Panc1 (cell line): ENCODE measurements at regions of chr13 and their contacts with region 1.

Region 1: GRCh38 chr13:95403828-95404522 is 102.7 kb upstream of the ABCC4 start:
- DNase-seq: peak; percentile 51
- ATAC-seq: peak; percentile 92
- H3K4me3 ChIP-seq: peak overlapping the region; percentile 14 to 47; a peak in 3 of 4 replicates
- H3K27ac ChIP-seq: peak overlapping the region; percentile 9; the same call in 1 of the 2 replicates
- H3K4me1 ChIP-seq: peaks cover 6% of the 10 kb centered on the region; the same call in 1 of the 2 replicates
- H3K27me3 ChIP-seq: no peaks in the 10 kb centered on the region
- CTCF ChIP-seq: peak; percentile 84

Region 2: DNA sequence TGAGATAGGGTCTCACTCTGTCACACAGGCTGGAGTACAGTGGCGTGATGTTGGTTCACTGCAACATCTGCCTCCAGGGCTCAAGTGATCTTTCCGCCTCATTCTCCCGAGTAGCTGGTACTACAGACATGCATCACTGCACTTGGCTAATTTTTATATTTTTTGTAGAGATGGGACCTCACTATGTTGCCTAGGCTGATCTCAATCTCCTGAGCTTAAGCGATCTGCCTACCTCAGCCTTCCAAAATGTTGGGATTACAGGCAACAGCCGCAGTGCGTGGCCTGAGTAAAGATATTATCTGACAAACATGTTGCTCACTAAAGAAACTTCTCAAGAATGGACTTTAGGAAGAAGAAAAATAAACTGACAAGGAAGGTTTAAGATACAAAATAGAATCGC is 22.7 kb after region 1 on chr13:
- CTCF ChIA-PET with region 1: no interaction called
- POLR2A ChIA-PET with region 1: interaction called, 5 read pairs
- in situ Hi-C with region 1: no loop called
- intact Hi-C with region 1: loop called (anchors 2 kb)
- DNase-seq: no peak
- ATAC-seq: no peak
- H3K4me3 ChIP-seq: no peak overlapping the region
- H3K27ac ChIP-seq: no peak overlapping the region
- H3K4me1 ChIP-seq: no peaks in the 10 kb centered on the region
- H3K27me3 ChIP-seq: no peaks in the 10 kb centered on the region
- CTCF ChIP-seq: no peak

Region 3: GRCh38 chr13:95805921-95806320 is 401.9 kb after region 1 on chr13:
- CTCF ChIA-PET with region 1: interaction called, 11 read pairs
- POLR2A ChIA-PET with region 1: no interaction called
- in situ Hi-C with region 1: no loop called
- intact Hi-C with region 1: no loop called
- DNase-seq: no peak
- ATAC-seq: no peak
- H3K4me3 ChIP-seq: no peak overlapping the region
- H3K27ac ChIP-seq: no peak overlapping the region
- H3K4me1 ChIP-seq: no peaks in the 10 kb centered on the region
- H3K27me3 ChIP-seq: no peaks in the 10 kb centered on the region
- CTCF ChIP-seq: no peak